ENCODE measurements at regions of chr3 and their contacts with region 1.

Region 1: GRCh38 chr3:100737334-100737733 is 28.0 kb downstream of the TFG start:
- H3K4me3 Mint-ChIP-seq: no peak overlapping the region
- H3K27ac Mint-ChIP-seq: no peak overlapping the region
- H3K4me1 Mint-ChIP-seq: no peaks in the 10 kb centered on the region
- H3K27me3 Mint-ChIP-seq: no peaks in the 10 kb centered on the region

Region 2: DNA sequence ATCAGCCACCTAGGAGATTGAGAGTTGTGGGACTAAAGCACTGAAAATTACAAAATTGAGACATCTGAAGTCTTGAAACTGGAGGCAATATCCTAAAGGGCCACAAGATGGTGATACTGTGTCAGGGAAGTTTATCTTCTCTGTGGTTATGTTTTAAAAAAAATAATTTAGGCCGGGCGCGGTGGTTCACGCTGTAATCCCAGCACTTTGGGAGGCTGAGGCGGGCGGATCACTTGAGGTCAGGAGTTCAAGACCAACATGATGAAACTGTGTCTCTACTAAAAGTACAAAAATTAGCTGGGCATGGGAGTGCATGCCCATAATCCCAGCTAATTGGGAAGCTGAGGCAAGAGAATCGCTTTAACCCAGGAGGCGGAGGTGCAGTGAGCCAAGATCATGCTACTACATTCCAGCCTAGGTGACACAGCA is 420.7 kb before region 1 on chr3:
- intact Hi-C with region 1: loop called (anchors 10 kb)
- H3K4me3 Mint-ChIP-seq: no peak overlapping the region
- H3K27ac Mint-ChIP-seq: no peak overlapping the region
- H3K4me1 Mint-ChIP-seq: no peaks in the 10 kb centered on the region
- H3K27me3 Mint-ChIP-seq: no peaks in the 10 kb centered on the region

Region 3: DNA sequence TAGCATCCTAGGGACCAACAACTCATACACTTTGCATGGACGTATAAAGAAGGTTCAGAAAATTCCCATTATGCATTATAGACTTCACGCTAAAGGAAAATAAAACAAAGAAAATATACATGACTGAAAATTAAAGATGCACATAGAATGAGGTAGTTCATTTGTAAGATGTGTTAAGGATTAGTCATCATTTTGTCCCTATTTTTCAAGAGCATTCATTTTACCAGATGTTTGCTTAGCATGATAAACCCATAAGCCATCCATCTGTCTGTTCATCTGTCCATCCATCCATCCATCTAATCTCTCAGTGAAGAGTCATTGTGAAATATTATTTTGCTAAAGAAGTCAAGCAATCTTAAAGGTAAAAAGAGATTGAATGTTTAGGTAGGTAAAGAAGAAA is 52.2 kb after region 1 on chr3:
- intact Hi-C with region 1: no loop called
- H3K4me3 Mint-ChIP-seq: no peak overlapping the region
- H3K27ac Mint-ChIP-seq: no peak overlapping the region
- H3K4me1 Mint-ChIP-seq: peaks cover 9% of the 10 kb centered on the region
- H3K27me3 Mint-ChIP-seq: no peaks in the 10 kb centered on the region

Region 4: GRCh38 chr3:101195951-101196713 is 458.8 kb after region 1 on chr3:
- intact Hi-C with region 1: loop called (anchors 5 kb)
- H3K4me3 Mint-ChIP-seq: no peak overlapping the region
- H3K27ac Mint-ChIP-seq: no peak overlapping the region
- H3K4me1 Mint-ChIP-seq: no peaks in the 10 kb centered on the region
- H3K27me3 Mint-ChIP-seq: no peaks in the 10 kb centered on the region

Region 5: GRCh38 chr3:101381809-101382208 is 644.5 kb after region 1 on chr3:
- intact Hi-C with region 1: loop called (anchors 5 kb)
- H3K4me3 Mint-ChIP-seq: no peak overlapping the region
- H3K27ac Mint-ChIP-seq: no peak overlapping the region
- H3K4me1 Mint-ChIP-seq: peaks cover 22% of the 10 kb centered on the region
- H3K27me3 Mint-ChIP-seq: no peaks in the 10 kb centered on the region

Region 6: DNA sequence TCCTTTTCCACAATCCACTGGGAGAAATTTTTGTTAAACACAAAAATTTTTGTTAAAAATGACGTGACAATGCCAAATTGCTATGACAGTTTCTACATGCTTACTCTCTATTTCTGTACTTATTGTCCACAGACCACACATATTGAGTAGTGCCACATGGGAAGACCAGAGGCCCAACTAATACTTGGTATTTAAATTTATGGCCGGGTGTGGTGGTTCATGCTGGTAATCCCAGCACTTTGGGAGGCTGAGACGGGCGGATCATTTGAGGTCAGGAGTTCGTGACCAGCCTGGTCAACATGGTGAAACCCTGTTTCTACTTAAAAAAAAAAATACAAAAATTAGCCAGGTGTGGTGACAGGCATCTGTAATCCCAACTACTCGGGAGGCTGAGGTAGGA is 919.3 kb after region 1 on chr3:
- intact Hi-C with region 1: loop called (anchors 10 kb)
- H3K4me3 Mint-ChIP-seq: no peak overlapping the region
- H3K27ac Mint-ChIP-seq: no peak overlapping the region
- H3K4me1 Mint-ChIP-seq: no peaks in the 10 kb centered on the region
- H3K27me3 Mint-ChIP-seq: no peaks in the 10 kb centered on the region